WTC11 (cell line): ENCODE measurements at regions of chr12 and their contacts with region 1.

Region 1: GRCh38 chr12:91542089-91542488 is 359.5 kb upstream of the DCN start:
- DNase-seq: no peak
- ATAC-seq: no peak
- H3K4me3 Mint-ChIP-seq: no peak overlapping the region
- H3K27ac Mint-ChIP-seq: no peak overlapping the region
- H3K4me1 Mint-ChIP-seq: peaks cover 8% of the 10 kb centered on the region
- H3K27me3 Mint-ChIP-seq: no peaks in the 10 kb centered on the region
- CTCF ChIP-seq: no peak

Region 2: GRCh38 chr12:91529829-91530228 is 12.3 kb before region 1 on chr12:
- CTCF ChIA-PET with region 1: no interaction called
- POLR2A ChIA-PET with region 1: no interaction called
- DNase-seq: no peak
- ATAC-seq: no peak
- H3K4me3 Mint-ChIP-seq: no peak overlapping the region
- H3K27ac Mint-ChIP-seq: no peak overlapping the region
- H3K4me1 Mint-ChIP-seq: no peaks in the 10 kb centered on the region
- H3K27me3 Mint-ChIP-seq: no peaks in the 10 kb centered on the region
- CTCF ChIP-seq: no peak

Region 3: DNA sequence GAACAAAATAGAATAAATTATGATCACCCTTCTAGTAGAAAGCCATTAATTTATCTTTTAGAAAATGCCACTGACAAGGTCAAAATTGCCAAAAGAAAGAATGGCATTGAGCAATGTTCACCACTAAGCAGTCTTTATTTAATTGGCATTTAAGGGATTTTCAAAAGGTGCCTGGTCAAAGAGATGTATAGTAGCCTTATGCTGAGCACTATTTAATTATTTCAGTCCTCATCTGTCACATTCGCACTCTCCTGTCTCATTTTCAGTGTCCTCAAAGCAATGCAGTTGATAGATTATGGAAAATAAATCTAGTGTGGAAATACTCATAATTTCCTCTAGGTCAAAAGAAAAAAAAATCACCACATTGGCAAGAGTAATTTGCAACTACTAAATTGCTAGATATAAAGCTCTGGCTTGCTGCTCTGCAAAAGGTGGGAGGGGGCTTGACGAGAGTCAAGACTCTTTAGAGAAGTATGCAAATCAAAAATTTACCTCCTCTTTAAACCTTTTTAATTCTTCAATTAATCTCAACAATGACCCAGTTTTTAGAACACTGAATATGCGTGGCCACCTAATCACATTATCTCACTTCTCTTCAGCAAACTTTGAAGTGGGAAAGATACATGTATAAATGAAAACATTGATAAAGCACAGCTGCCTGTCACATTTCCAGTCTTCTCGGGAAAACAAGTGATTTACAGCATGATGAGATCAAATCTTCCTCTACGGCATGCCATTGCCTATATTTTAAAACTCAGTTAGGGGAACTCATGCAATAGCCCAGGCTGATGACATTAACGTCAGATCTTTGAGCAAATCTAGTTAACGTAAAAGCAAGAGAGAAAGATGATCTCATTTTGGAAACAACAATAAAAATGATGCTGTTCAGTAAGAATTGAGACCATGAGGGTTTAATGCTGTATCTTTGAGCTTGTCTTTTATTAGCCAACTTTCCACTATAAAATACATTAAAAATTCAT is 13.6 kb after region 1 on chr12:
- CTCF ChIA-PET with region 1: no interaction called
- POLR2A ChIA-PET with region 1: no interaction called
- DNase-seq: no peak
- ATAC-seq: no peak
- H3K4me3 Mint-ChIP-seq: no peak overlapping the region
- H3K27ac Mint-ChIP-seq: no peak overlapping the region
- H3K4me1 Mint-ChIP-seq: no peaks in the 10 kb centered on the region
- H3K27me3 Mint-ChIP-seq: no peaks in the 10 kb centered on the region
- CTCF ChIP-seq: no peak

Region 4: DNA sequence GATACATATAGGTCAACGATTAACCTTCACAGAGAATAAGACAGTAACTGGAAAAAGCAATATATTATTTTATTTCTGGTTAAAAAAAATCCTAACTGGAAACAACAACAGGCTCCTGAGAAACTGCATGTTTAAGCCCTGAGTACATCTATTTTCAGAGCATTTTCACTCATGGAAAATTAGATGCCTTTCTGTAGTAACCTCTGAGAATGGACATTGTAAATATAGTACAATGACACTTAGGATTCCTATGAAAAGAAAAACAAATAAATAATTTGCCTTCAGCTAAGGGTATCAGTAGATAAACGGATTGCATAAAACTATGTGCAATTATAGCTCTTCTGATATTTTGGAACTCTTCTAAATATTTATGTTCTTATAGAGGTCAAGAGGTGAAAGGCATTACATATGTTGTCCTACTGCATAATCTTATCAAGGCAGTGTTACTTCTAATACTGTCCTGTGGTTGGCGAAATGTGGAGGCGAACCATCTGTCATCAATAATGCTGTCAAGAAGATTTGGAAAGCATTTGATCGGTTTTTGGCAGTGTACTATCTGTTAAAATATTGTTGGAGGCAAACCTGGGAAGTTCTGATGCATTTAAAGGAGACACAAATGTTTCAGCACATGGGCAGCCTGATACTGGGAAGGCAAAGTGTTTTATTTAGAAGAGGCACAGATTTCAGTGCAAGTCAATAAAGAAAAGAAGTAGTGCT is 221.7 kb after region 1 on chr12:
- CTCF ChIA-PET with region 1: no interaction called
- POLR2A ChIA-PET with region 1: no interaction called
- DNase-seq: no peak
- ATAC-seq: no peak
- H3K4me3 Mint-ChIP-seq: no peak overlapping the region
- H3K27ac Mint-ChIP-seq: no peak overlapping the region
- H3K4me1 Mint-ChIP-seq: no peaks in the 10 kb centered on the region
- H3K27me3 Mint-ChIP-seq: no peaks in the 10 kb centered on the region
- CTCF ChIP-seq: no peak

Region 5: DNA sequence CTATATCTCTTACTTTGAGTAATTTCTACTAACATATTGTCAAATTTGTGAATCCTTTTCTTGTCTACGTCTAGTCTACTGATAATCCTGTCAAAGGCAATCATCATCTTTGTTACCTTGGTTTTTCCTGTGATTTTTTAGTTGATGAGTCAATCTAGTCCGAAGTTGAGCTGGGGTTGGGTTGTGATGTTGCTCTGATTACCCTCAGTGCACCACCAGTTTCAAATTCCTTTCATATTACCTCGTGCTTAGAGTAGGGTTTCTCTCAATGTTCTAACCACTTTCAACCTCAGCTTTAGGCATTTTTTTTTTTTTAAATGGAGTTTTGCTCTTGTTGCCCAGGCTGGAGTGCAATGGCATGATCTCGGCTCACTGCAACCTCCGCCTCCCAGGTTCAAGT is 416.7 kb after region 1 on chr12:
- CTCF ChIA-PET with region 1: no interaction called
- POLR2A ChIA-PET with region 1: no interaction called
- DNase-seq: no peak
- ATAC-seq: no peak
- H3K4me3 Mint-ChIP-seq: no peak overlapping the region
- H3K27ac Mint-ChIP-seq: no peak overlapping the region
- H3K4me1 Mint-ChIP-seq: peaks cover 4% of the 10 kb centered on the region; the same call in 1 of the 2 replicates
- H3K27me3 Mint-ChIP-seq: no peaks in the 10 kb centered on the region; the same call in 1 of the 2 replicates
- CTCF ChIP-seq: no peak

Region 6: DNA sequence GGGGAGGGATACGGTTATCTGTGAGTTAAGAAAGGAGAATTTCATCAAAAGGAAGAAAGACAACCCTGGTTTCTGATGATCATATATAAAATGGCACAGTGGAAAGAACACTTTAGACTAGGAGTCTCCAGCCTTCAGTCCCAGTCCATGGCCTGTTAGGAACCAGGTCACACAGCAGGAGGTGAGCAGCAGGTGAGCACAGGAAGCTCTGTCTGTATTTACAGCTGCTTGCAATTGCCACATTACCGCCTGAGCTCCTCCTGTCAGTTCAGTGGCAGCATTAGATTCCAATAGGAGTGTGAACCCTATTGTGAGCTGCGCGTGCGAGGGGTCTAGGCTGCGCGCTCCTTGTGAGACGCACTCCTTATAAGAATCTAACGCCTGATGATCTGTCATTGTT is 465.7 kb after region 1 on chr12:
- CTCF ChIA-PET with region 1: no interaction called
- POLR2A ChIA-PET with region 1: interaction called, 10 read pairs
- DNase-seq: peak; percentile 29
- ATAC-seq: peak; percentile 51
- H3K4me3 Mint-ChIP-seq: no peak overlapping the region
- H3K27ac Mint-ChIP-seq: no peak overlapping the region
- H3K4me1 Mint-ChIP-seq: peaks cover 16% of the 10 kb centered on the region
- H3K27me3 Mint-ChIP-seq: no peaks in the 10 kb centered on the region
- CTCF ChIP-seq: no peak